HEK293T (cell line): ENCODE measurements at regions of chr1 and their contacts with region 1.

Region 1: GRCh38 chr1:65687428-65688214 is 105.1 kb upstream of the PDE4B start:
- DNase-seq: peak; percentile 90

Region 2: DNA sequence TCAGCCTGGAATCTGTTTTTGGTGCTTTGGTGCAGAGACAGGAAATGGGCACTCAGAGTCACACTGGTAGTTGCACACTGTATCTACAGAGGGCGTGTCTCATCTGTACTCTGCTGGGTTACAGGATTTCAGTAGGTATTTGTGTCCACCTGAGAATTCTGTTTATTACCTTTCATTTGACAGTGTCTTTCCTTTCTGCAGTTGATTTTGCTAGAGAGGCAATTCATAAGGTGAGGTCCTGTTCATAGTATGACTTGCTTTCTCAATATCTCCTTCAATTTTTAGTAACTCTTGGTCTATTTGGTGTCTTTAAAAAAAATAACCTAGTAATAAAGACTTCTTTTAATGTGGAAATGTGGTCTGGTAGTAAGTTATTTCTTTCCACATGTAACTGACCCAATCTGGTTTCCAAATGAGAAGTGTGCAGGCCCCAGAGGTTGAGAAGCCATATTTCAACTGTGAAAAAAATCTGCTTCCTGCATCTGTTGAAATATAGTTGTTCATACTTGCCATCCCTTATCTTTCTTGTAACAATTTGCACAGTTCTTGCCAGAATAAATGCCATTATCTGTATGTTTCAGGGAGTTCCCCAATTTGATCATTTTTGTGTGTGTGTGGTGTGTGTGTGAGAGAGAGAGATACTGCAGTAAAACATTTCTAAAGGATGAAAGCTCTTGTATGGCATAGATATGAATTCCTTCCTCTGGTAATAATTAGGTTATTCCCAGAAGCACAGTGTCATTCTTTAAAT is 456.7 kb before region 1 on chr1:
- CTCF ChIA-PET with region 1: interaction called, 17 read pairs
- POLR2A ChIA-PET with region 1: no interaction called
- DNase-seq: no peak

Region 3: GRCh38 chr1:65235867-65236805 is 451.5 kb before region 1 on chr1:
- CTCF ChIA-PET with region 1: interaction called, 17 read pairs
- POLR2A ChIA-PET with region 1: no interaction called
- DNase-seq: peak; percentile 55

Region 4: DNA sequence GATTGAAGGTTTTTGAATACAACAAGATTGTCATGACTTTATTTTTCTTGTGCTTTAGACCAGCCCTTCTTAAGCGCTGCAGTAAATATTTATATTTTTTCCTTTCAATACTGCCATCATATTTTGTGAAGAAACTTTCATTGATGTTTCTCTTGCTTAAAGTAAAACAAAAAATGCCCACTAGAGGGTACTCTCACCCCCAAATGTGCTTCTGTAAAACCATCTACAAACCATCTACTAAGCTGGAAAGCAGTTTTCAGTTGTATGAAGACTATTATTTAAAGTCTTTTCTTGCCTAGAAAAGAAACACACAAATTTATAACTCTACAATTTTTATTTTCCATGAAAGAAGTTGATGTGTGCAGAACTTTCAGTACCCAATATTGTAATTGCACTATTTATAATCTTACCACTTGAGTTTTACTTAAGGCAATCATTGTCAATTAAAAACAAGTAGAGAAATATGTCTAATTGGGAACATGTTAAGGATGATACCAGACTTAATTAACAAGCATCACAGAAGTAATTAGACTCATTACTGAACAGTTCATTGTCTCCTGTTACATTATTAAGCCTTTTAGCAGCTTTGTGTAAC is 256.4 kb before region 1 on chr1:
- CTCF ChIA-PET with region 1: interaction called, 23 read pairs
- POLR2A ChIA-PET with region 1: no interaction called
- DNase-seq: peak; percentile 51

Region 5: GRCh38 chr1:65670518-65670917 is 17.1 kb before region 1 on chr1:
- CTCF ChIA-PET with region 1: no interaction called
- POLR2A ChIA-PET with region 1: no interaction called
- DNase-seq: no peak

Region 6: GRCh38 chr1:65773391-65773790 is 85.8 kb after region 1 on chr1:
- CTCF ChIA-PET with region 1: no interaction called
- POLR2A ChIA-PET with region 1: no interaction called
- DNase-seq: no peak